Activated naive CD4-positive, alpha-beta T cell treated with anti-CD3 and anti-CD28 coated beads for 36 hours (primary cell): ENCODE measurements at regions of chr9 and their contacts with region 1.

Region 1: GRCh38 chr9:7186175-7186574 is 428.4 kb downstream of the KDM4C start:
- DNase-seq: peak; percentile 17
- H3K4me3 Mint-ChIP-seq: no peak overlapping the region
- H3K27ac Mint-ChIP-seq: no peak overlapping the region
- H3K4me1 Mint-ChIP-seq: no peaks in the 10 kb centered on the region
- H3K27me3 Mint-ChIP-seq: no peaks in the 10 kb centered on the region

Region 2: GRCh38 chr9:6827439-6827838 is 358.7 kb before region 1 on chr9:
- CTCF ChIA-PET with region 1: interaction called, 5 read pairs
- intact Hi-C with region 1: loop called (anchors 1 kb)
- DNase-seq: peak; percentile 68
- H3K4me3 Mint-ChIP-seq: no peak overlapping the region
- H3K27ac Mint-ChIP-seq: no peak overlapping the region
- H3K4me1 Mint-ChIP-seq: peaks cover 8% of the 10 kb centered on the region
- H3K27me3 Mint-ChIP-seq: no peaks in the 10 kb centered on the region

Region 3: GRCh38 chr9:6907772-6908381 is 278.3 kb before region 1 on chr9:
- CTCF ChIA-PET with region 1: interaction called, 4 read pairs
- intact Hi-C with region 1: loop called (anchors 1 kb)
- DNase-seq: no peak
- H3K4me3 Mint-ChIP-seq: no peak overlapping the region
- H3K27ac Mint-ChIP-seq: no peak overlapping the region
- H3K4me1 Mint-ChIP-seq: peaks cover 5% of the 10 kb centered on the region
- H3K27me3 Mint-ChIP-seq: no peaks in the 10 kb centered on the region

Region 4: GRCh38 chr9:6973762-6974161 is 212.4 kb before region 1 on chr9:
- CTCF ChIA-PET with region 1: no interaction called
- intact Hi-C with region 1: no loop called
- DNase-seq: no peak
- H3K4me3 Mint-ChIP-seq: no peak overlapping the region
- H3K27ac Mint-ChIP-seq: no peak overlapping the region
- H3K4me1 Mint-ChIP-seq: peaks cover 17% of the 10 kb centered on the region
- H3K27me3 Mint-ChIP-seq: no peaks in the 10 kb centered on the region

Region 5: DNA sequence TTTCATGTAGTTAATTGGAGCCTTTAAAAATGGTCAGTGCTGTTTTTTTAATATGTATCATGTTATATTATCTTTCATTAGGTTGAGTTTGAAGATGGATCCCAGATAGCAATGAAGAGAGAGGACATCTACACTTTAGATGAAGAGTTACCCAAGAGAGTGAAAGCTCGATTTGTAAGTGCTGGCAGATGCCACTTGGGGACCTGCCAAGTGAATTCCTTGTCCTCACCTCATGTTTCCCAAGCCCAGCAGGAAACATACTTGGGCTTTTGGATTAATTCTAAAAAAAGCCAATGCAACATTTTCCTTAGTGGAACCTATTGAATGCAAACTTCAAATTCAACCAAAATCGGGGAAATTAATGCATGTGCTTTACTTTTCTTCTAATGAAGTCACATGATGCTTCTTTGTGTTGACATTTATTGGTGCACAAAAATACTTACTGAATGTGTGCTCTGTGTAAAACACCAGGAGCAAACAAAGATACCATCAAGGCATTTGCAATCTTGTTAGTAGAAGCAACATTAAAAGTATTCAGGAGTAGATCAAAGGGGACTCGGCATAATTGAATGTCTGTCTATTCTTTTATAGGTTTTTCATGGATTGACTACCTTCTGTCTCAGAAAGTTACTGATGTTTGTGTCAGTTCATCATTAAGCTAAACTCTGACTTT is 16.3 kb before region 1 on chr9:
- CTCF ChIA-PET with region 1: no interaction called
- intact Hi-C with region 1: no loop called
- DNase-seq: no peak
- H3K4me3 Mint-ChIP-seq: no peak overlapping the region
- H3K27ac Mint-ChIP-seq: no peak overlapping the region
- H3K4me1 Mint-ChIP-seq: peaks cover 2% of the 10 kb centered on the region
- H3K27me3 Mint-ChIP-seq: no peaks in the 10 kb centered on the region